ENCODE measurements at regions of chr6 and their contacts with region 1.

Region 1: GRCh38 chr6:150176152-150176551 is 33.3 kb downstream of the PPP1R14C start:
- DNase-seq: peak in 1 of 2 donors; percentile 47
- H3K4me3 ChIP-seq: no peak overlapping the region
- H3K27ac ChIP-seq: peak overlapping the region; percentile 58 to 71
- H3K4me1 ChIP-seq: no peaks in the 10 kb centered on the region
- H3K27me3 ChIP-seq: no peaks in the 10 kb centered on the region
- CTCF ChIP-seq: no peak
- POLR2A ChIP-seq: no peak

Region 2: DNA sequence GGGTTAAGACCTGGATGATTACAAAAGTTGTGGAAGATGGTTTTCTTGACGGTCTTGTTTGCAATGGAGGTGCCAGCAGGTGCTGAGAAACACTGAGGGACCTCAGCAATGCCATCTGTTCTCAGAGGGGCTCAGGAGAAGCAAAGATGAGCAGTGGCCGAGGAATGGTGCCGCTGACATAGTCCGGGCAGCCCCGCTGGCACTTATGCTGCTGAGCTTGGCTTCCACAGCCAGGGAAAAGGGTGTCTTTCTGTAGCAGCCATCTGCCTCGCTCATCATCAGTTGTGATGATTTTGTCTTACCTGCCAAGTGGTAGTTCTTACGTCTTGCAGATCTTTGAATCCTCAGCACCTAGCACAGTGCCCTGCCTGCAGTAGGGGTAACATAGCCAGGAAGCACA is 22.4 kb after region 1 on chr6:
- intact Hi-C with region 1: loop called (anchors 1 kb)
- DNase-seq: no peak
- H3K4me3 ChIP-seq: no peak overlapping the region
- H3K27ac ChIP-seq: no peak overlapping the region
- H3K4me1 ChIP-seq: no peaks in the 10 kb centered on the region
- H3K27me3 ChIP-seq: no peaks in the 10 kb centered on the region
- CTCF ChIP-seq: no peak
- POLR2A ChIP-seq: no peak

Region 3: GRCh38 chr6:150207931-150208570 is 31.9 kb after region 1 on chr6:
- intact Hi-C with region 1: loop called (anchors 1 kb)
- DNase-seq: no peak
- H3K4me3 ChIP-seq: no peak overlapping the region
- H3K27ac ChIP-seq: no peak overlapping the region
- H3K4me1 ChIP-seq: no peaks in the 10 kb centered on the region
- H3K27me3 ChIP-seq: no peaks in the 10 kb centered on the region
- CTCF ChIP-seq: no peak
- POLR2A ChIP-seq: no peak

Region 4: GRCh38 chr6:151269321-151269995 is 1093.3 kb after region 1 on chr6:
- intact Hi-C with region 1: no loop called
- DNase-seq: no peak
- H3K4me3 ChIP-seq: no peak overlapping the region
- H3K27ac ChIP-seq: peak overlapping the region in 1 of 2 donors; percentile 40
- H3K4me1 ChIP-seq: no peaks in the 10 kb centered on the region
- H3K27me3 ChIP-seq: no peaks in the 10 kb centered on the region
- CTCF ChIP-seq: no peak
- POLR2A ChIP-seq: no peak